GM12878 (cell line): ENCODE measurements at regions of chrX and their contacts with region 1.

Region 1: GRCh38 chrX:40792433-40792832 is 57.1 kb upstream of the MED14 start:
- DNase-seq: no peak
- ATAC-seq: peak; percentile 22; the same call in 2 of the 3 replicates
- H3K4me3 ChIP-seq: no peak overlapping the region
- H3K27ac ChIP-seq: no peak overlapping the region
- H3K4me1 ChIP-seq: no peaks in the 10 kb centered on the region
- H3K27me3 ChIP-seq: no peaks in the 10 kb centered on the region
- CTCF ChIP-seq: no peak
- EP300 ChIP-seq: no peak
- POLR2A ChIP-seq: no peak
- RAD21 ChIP-seq: no peak

Region 2: GRCh38 chrX:40395102-40395501 is 397.3 kb before region 1 on chrX:
- CTCF ChIA-PET with region 1: no interaction called
- POLR2A ChIA-PET with region 1: no interaction called
- RAD21 ChIA-PET with region 1: no interaction called
- SMC1A ChIA-PET with region 1: no interaction called
- in situ Hi-C with region 1: no loop called
- intact Hi-C with region 1: no loop called
- DNase-seq: no peak
- ATAC-seq: no peak
- H3K4me3 ChIP-seq: no peak overlapping the region
- H3K27ac ChIP-seq: no peak overlapping the region
- H3K4me1 ChIP-seq: no peaks in the 10 kb centered on the region; the same call in 1 of the 2 replicates
- H3K27me3 ChIP-seq: no peaks in the 10 kb centered on the region
- CTCF ChIP-seq: no peak
- EP300 ChIP-seq: no peak
- POLR2A ChIP-seq: no peak
- RAD21 ChIP-seq: no peak

Region 3: GRCh38 chrX:40539214-40540142 is 253.0 kb before region 1 on chrX:
- CTCF ChIA-PET with region 1: interaction called, 50 read pairs
- POLR2A ChIA-PET with region 1: no interaction called
- RAD21 ChIA-PET with region 1: interaction called, 18 read pairs
- SMC1A ChIA-PET with region 1: interaction called, 48 read pairs
- in situ Hi-C with region 1: no loop called
- intact Hi-C with region 1: loop called (anchors 2 kb)
- DNase-seq: peak; percentile 56
- ATAC-seq: peak; percentile 90
- H3K4me3 ChIP-seq: no peak overlapping the region
- H3K27ac ChIP-seq: peak overlapping the region; percentile 59
- H3K4me1 ChIP-seq: peaks cover 11% of the 10 kb centered on the region
- H3K27me3 ChIP-seq: peaks cover 0 to 2% of the 10 kb centered on the region in 2 experiments; a peak in 2 of 4 replicates
- CTCF ChIP-seq: peak; percentile 30 to 51 (median 48); a peak in 5 of 6 replicates
- EP300 ChIP-seq: no peak
- POLR2A ChIP-seq: no peak
- RAD21 ChIP-seq: 0 out of 2 replicates have a peak, but pooled peaks have one; percentile 26

Region 4: GRCh38 chrX:40663880-40664633 is 128.4 kb before region 1 on chrX:
- CTCF ChIA-PET with region 1: interaction called, 23 read pairs
- POLR2A ChIA-PET with region 1: no interaction called
- RAD21 ChIA-PET with region 1: interaction called, 4 read pairs
- SMC1A ChIA-PET with region 1: interaction called, 10 read pairs
- in situ Hi-C with region 1: loop called (anchors 5 kb)
- intact Hi-C with region 1: loop called (anchors 5 kb)
- DNase-seq: no peak
- ATAC-seq: no peak
- H3K4me3 ChIP-seq: no peak overlapping the region
- H3K27ac ChIP-seq: no peak overlapping the region
- H3K4me1 ChIP-seq: no peaks in the 10 kb centered on the region; the same call in 1 of the 2 replicates
- H3K27me3 ChIP-seq: no peaks in the 10 kb centered on the region
- CTCF ChIP-seq: peak; percentile 14 to 26 (median 24); a peak in 2 of 6 replicates
- EP300 ChIP-seq: no peak
- POLR2A ChIP-seq: no peak
- RAD21 ChIP-seq: 0 out of 2 replicates have a peak, but pooled peaks have one; percentile 20

Region 5: GRCh38 chrX:40685362-40685918 is 107.0 kb before region 1 on chrX:
- CTCF ChIA-PET with region 1: interaction called, 11 read pairs
- POLR2A ChIA-PET with region 1: no interaction called
- RAD21 ChIA-PET with region 1: interaction called, 4 read pairs
- SMC1A ChIA-PET with region 1: interaction called, 4 read pairs
- in situ Hi-C with region 1: no loop called
- intact Hi-C with region 1: no loop called
- DNase-seq: no peak
- ATAC-seq: peak; percentile 44
- H3K4me3 ChIP-seq: no peak overlapping the region
- H3K27ac ChIP-seq: no peak overlapping the region
- H3K4me1 ChIP-seq: no peaks in the 10 kb centered on the region; the same call in 1 of the 2 replicates
- H3K27me3 ChIP-seq: no peaks in the 10 kb centered on the region
- CTCF ChIP-seq: no peak
- EP300 ChIP-seq: no peak
- POLR2A ChIP-seq: no peak
- RAD21 ChIP-seq: no peak

Region 6: DNA sequence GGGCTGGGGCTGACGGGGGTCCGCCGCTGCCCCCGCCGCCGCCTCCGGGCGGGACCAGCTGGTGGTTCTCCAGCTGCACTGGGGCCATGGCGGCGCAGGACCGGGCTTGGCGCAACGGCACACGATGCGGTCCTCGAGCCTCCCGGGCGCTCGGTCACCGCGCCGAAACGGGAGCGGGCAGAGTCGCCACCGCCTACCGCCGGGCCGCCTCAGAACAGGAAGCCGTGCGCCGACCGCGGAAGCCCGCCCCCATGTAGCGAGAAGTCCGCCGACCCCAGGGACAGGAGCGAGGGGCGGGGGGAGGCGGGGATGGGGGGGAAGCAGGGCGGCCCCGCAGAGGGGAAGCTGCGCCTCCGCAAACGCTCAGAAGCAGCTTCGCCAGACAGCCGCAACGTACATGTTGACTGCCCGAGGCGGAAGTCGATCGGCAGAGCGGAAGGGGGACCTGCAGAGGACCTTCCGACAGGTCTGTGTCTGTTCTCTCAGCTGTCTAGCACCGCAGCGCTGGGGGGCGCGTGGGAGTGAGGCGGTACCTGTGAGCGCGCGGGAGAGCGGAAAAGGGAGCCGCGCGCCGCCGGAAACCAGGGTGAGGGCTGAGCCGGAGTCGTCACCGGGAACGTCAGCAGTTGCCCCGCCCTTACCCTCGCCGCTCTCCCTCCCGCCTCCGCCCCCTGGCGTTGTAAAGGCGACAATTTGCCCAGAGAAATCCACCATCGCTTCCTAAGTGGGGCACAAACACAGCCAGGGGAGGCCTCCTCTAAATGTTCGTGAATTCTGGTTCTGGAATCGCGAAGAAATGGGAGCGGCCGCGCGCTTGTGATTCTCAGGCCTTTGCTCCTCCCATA is 56.9 kb before region 1 on chrX and contains the start of gene MED14:
- CTCF ChIA-PET with region 1: interaction called, 16 read pairs
- POLR2A ChIA-PET with region 1: no interaction called
- RAD21 ChIA-PET with region 1: interaction called, 3 read pairs
- SMC1A ChIA-PET with region 1: interaction called, 3 read pairs
- in situ Hi-C with region 1: no loop called
- intact Hi-C with region 1: loop called (anchors 5 kb)
- DNase-seq: peak; percentile 73
- ATAC-seq: peak; percentile 92
- H3K4me3 ChIP-seq: peak within 1 kb of the TSS; percentile 86
- H3K27ac ChIP-seq: peak within 1 kb of the TSS; percentile 92
- H3K4me1 ChIP-seq: no peaks in the 10 kb centered on the region; the same call in 1 of the 2 replicates
- H3K27me3 ChIP-seq: no peaks in the 10 kb centered on the region
- CTCF ChIP-seq: peak; percentile 62 to 64 (median 62)
- EP300 ChIP-seq: 0 out of 4 replicates have a peak, but pooled peaks of 1 of the 2 experiments have one; percentile 5
- POLR2A ChIP-seq: peak; percentile 93
- RAD21 ChIP-seq: no peak
- polyA plus RNA-seq, gene MED14: 8.8 to 17.0 TPM

Region 7: GRCh38 chrX:40871385-40872082 is 79.1 kb after region 1 on chrX:
- CTCF ChIA-PET with region 1: no interaction called
- POLR2A ChIA-PET with region 1: no interaction called
- RAD21 ChIA-PET with region 1: interaction called, 7 read pairs
- SMC1A ChIA-PET with region 1: interaction called, 3 read pairs
- in situ Hi-C with region 1: no loop called
- intact Hi-C with region 1: loop called (anchors 2 kb)
- DNase-seq: peak; percentile 87
- ATAC-seq: peak; percentile 89
- H3K4me3 ChIP-seq: no peak overlapping the region
- H3K27ac ChIP-seq: peak overlapping the region; percentile 68
- H3K4me1 ChIP-seq: peaks cover 6% of the 10 kb centered on the region; the same call in 1 of the 2 replicates
- H3K27me3 ChIP-seq: no peaks in the 10 kb centered on the region
- CTCF ChIP-seq: peak in 1 of 3 experiments; percentile 27; a peak in 1 of 6 replicates
- EP300 ChIP-seq: peak; percentile 54 to 71; a peak in 2 of 4 replicates
- POLR2A ChIP-seq: no peak
- RAD21 ChIP-seq: peak; percentile 25; the same call in 1 of the 2 replicates

Region 8: GRCh38 chrX:41110801-41111625 is 318.6 kb after region 1 on chrX:
- CTCF ChIA-PET with region 1: interaction called, 41 read pairs
- POLR2A ChIA-PET with region 1: no interaction called
- RAD21 ChIA-PET with region 1: interaction called, 19 read pairs
- SMC1A ChIA-PET with region 1: interaction called, 43 read pairs
- in situ Hi-C with region 1: no loop called
- intact Hi-C with region 1: loop called (anchors 5 kb)
- DNase-seq: no peak
- ATAC-seq: no peak
- H3K4me3 ChIP-seq: no peak overlapping the region
- H3K27ac ChIP-seq: no peak overlapping the region
- H3K4me1 ChIP-seq: peaks cover 4% of the 10 kb centered on the region; the same call in 1 of the 2 replicates
- H3K27me3 ChIP-seq: no peaks in the 10 kb centered on the region
- CTCF ChIP-seq: no peak
- EP300 ChIP-seq: no peak
- POLR2A ChIP-seq: no peak
- RAD21 ChIP-seq: no peak